ENCODE measurements at regions of chr6 and their contacts with region 1.

Region 1: DNA sequence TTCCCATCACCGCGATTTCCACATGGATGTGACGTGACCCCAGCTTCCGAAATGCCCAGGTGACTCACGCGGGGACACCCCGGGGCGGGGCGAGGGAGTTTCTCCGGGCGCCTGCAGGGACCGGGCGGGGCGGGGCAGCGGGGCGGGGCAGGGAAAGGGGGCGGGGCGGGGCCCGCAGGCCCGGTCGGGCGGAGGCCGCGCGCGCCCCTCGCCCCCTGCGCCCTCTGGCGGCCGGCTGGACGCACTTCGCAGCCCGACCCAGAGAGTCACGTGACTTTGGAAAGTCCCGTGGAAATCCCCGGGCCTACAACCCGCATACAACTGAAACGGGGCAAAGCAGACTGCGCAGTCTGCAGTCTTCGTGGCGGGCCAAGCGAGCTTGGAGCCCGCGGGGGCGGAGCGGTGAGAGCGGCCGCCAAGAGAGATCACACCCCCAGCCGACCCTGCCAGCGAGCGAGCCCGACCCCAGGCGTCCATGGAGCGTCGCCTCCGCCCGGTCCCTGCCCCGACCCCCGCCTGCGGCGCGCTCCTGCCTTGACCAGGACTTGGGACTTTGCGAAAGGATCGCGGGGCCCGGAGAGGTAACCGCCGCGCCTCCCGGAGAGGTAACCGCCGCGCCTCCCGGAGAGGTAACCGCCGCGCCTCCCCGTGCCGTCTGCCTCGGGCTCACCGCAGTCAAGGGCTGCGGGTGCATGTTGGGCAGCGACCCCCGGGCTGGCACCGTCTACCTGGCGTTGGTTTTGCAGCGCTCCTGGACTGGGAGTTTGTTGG is at the start of gene TNFAIP3:
- DNase-seq: peak; percentile 96
- CTCF ChIP-seq: peak; percentile 95

Region 2: DNA sequence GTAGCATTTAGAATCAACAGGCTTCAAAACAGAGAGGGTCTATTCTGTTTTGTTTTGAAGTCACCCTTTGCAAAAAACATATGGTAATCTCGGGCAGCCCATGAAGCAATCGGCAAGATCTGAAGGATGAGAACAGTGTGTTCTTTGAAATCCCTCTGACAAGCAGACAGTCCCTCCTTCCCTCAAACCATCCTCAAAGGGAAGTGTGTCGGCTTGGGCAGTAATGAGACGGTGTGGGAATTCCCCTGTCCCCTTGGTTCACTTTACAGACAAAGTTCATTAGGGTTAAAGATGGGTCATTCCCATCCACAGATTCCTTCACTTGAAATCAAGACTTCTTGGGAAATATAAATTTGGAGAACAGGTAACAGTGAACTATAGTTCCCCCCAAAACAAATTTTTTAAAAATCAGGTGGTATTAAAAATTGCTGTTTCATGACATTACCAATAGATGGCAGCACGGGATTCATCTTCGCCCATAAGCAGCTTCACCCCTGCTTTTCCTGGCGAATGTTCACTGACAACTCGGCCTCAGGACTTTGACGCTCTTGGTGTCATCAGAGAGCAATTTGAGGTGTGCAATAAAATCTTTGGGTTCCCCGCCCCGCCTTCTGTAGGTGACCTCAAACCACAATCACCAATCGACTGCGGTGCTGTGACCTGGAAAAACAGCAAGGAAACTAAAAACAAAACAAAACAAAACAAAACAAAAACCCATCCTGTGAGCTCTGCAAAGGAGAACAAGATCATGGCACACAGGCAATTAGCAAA is 159.3 kb before region 1 on chr6:
- in situ Hi-C with region 1: loop called (anchors 5 kb)
- DNase-seq: peak; percentile 59
- CTCF ChIP-seq: peak; percentile 38

Region 3: DNA sequence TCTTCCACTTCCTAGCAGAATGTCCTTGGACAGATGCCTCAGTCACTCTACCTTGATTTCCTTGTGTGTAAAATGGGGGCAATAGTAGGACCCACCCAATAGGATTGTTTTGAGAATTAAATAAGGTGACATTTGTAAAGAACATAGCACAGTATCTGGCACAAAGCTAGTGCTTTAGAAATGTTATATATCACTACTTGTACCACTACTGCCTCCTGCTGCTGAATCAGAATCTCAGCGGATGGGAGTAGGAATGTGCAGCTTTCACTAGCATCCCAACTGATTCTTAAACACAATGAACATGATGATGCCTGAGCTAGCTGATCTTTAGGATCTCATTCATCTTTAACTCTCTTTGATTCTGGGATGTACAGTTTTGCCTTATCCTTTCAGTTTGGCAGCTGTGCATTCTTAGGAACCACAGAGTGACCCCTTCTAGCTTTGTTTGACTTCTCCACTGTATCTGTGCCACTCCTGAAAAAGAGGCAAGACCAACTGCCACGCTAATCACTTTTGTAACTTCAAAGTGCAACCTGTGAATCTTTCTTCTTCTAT is 344.0 kb after region 1 on chr6:
- in situ Hi-C with region 1: no loop called
- DNase-seq: no peak
- CTCF ChIP-seq: no peak

Measured in GM13976 (cell line).